ENCODE measurements at regions of chrX and their contacts with region 1.

Region 1: GRCh38 chrX:78555401-78555980 is 103.6 kb downstream of the RTL3 start:
- DNase-seq: no peak
- H3K4me3 ChIP-seq: no peak overlapping the region
- H3K27ac ChIP-seq: no peak overlapping the region
- H3K4me1 ChIP-seq: no peaks in the 10 kb centered on the region
- H3K27me3 ChIP-seq: no peaks in the 10 kb centered on the region
- CTCF ChIP-seq: no peak

Region 2: DNA sequence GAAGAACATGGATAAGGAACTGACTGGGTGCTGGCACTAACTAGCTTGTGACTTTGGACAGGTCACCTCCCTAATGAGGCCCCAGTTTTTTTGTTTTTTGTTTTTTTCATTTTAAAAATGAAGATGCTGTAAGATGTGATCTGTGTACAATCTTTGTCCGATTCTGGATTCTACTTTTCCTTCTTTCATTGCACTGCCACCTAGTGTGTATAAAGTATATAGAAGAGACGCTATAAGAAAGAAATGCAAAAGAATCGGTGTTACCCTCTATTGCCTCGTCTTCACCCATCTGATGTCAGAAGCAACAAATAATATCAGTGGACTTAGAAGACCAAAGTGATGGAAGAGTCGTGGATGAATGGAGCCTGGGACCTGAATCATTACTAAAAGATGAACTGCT is 331.1 kb after region 1 on chrX:
- intact Hi-C with region 1: loop called (anchors 10 kb)
- DNase-seq: no peak
- H3K4me3 ChIP-seq: no peak overlapping the region
- H3K27ac ChIP-seq: no peak overlapping the region
- H3K4me1 ChIP-seq: no peaks in the 10 kb centered on the region
- H3K27me3 ChIP-seq: no peaks in the 10 kb centered on the region
- CTCF ChIP-seq: no peak

Region 3: DNA sequence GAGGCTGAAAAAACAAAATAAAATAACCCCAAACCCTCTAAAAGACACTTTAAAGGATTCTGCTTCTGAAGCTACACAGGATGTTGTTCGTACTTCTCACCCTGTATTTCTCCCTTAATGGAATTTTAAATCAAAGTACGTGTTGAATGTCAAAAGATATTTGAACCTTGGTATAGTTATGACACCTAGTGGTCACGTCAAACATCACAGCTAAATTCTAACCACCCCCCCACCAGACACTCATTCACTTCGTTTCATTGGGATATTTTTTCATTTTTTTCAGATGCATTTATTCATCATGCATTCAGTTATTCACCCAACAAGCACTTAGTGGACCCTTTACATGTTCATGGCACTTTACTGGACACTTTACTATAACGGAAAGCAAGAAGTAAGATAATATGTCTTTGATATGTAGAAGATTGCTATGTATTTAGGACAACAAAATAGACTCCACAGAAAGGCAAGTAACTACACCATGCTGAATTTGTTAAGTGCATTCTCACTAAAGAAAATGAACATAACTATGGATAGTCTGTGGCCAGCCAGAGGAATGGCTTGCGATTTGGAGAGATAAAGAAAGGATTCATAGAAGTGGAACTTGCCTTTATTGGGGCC is 526.5 kb after region 1 on chrX:
- intact Hi-C with region 1: loop called (anchors 10 kb)
- DNase-seq: peak; percentile 19
- H3K4me3 ChIP-seq: no peak overlapping the region
- H3K27ac ChIP-seq: no peak overlapping the region
- H3K4me1 ChIP-seq: no peaks in the 10 kb centered on the region
- H3K27me3 ChIP-seq: no peaks in the 10 kb centered on the region
- CTCF ChIP-seq: peak; percentile 55

Measured in colonic mucosa (tissue), 4 donors.